Activated CD8-positive, alpha-beta memory T cell treated with anti-CD3 and anti-CD28 coated beads, Interleukin-2, amount 10 ng/mL, durations not matched to agents 7 days and 5 days (primary cell): ENCODE measurements at regions of chr2 and their contacts with region 1.

Region 1: GRCh38 chr2:30711646-30712085 is 95.6 kb downstream of the CAPN13 start:
- DNase-seq: peak; percentile 94
- ATAC-seq: peak; percentile 79
- H3K4me3 Mint-ChIP-seq: no peak overlapping the region
- H3K27ac Mint-ChIP-seq: no peak overlapping the region
- H3K4me1 Mint-ChIP-seq: peaks cover 14% of the 10 kb centered on the region
- H3K27me3 Mint-ChIP-seq: peaks cover 7% of the 10 kb centered on the region

Region 2: DNA sequence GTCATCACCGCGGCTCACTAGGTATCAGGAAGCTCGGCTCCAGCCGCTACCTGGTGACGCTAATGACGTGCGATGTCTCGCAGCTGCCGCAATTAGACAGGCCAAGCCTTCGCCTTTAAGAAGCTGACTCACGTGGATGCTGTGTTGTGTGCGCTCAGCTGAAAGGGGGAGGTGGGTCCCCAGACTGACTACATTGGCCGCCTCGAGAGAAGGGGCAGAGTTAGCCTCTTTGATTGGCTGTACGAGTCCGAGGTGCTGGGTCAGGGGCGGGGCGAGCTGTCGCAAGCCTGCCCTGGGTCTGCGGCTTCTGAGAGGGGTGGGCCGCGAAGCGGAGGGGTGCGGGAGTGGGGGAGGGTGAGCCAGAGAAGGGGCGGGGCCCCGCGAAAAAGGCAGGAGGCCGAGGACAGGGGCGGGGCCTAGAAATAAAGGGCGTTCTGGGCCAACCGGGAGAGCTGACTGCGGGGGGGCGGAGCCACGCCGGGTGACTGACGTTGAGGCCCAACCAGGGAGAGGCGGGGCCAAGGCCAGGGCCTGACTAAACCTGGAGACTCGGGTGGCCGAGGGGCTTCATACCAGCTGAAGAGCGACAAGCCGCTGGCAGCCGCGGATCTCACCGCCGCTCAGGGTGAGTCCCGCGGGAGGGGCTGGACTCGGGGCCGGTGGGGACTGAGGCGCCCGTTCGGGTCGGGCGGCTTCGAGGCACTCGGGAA is 565.1 kb before region 1 on chr2 and contains the start of gene YPEL5:
- CTCF ChIA-PET with region 1: interaction called, 34 read pairs
- DNase-seq: peak; percentile 99
- ATAC-seq: peak; percentile 91
- H3K4me3 Mint-ChIP-seq: peak within 1 kb of the TSS; percentile 82
- H3K27ac Mint-ChIP-seq: peak within 1 kb of the TSS; percentile 97
- H3K4me1 Mint-ChIP-seq: peaks cover 33% of the 10 kb centered on the region
- H3K27me3 Mint-ChIP-seq: no peaks in the 10 kb centered on the region
- total RNA-seq, gene YPEL5: 24.2 to 26.5 TPM

Region 3: GRCh38 chr2:30208452-30208851 is 503.2 kb before region 1 on chr2:
- CTCF ChIA-PET with region 1: interaction called, 172 read pairs
- DNase-seq: peak; percentile 54
- ATAC-seq: peak; percentile 70
- H3K4me3 Mint-ChIP-seq: no peak overlapping the region
- H3K27ac Mint-ChIP-seq: no peak overlapping the region
- H3K4me1 Mint-ChIP-seq: peaks cover 14% of the 10 kb centered on the region
- H3K27me3 Mint-ChIP-seq: peaks cover 2% of the 10 kb centered on the region

Region 4: GRCh38 chr2:30691948-30692828 is 19.5 kb before region 1 on chr2:
- CTCF ChIA-PET with region 1: interaction called, 28 read pairs
- DNase-seq: peak; percentile 30
- ATAC-seq: no peak
- H3K4me3 Mint-ChIP-seq: no peak overlapping the region
- H3K27ac Mint-ChIP-seq: no peak overlapping the region
- H3K4me1 Mint-ChIP-seq: no peaks in the 10 kb centered on the region
- H3K27me3 Mint-ChIP-seq: peaks cover 3% of the 10 kb centered on the region

Region 5: GRCh38 chr2:30738164-30738911 is 26.7 kb after region 1 on chr2:
- CTCF ChIA-PET with region 1: no interaction called
- DNase-seq: no peak
- ATAC-seq: no peak
- H3K4me3 Mint-ChIP-seq: no peak overlapping the region
- H3K27ac Mint-ChIP-seq: no peak overlapping the region
- H3K4me1 Mint-ChIP-seq: no peaks in the 10 kb centered on the region
- H3K27me3 Mint-ChIP-seq: peaks cover 6% of the 10 kb centered on the region

Region 6: GRCh38 chr2:30823452-30823851 is 111.8 kb after region 1 on chr2:
- CTCF ChIA-PET with region 1: no interaction called
- DNase-seq: no peak
- ATAC-seq: no peak
- H3K4me3 Mint-ChIP-seq: no peak overlapping the region
- H3K27ac Mint-ChIP-seq: no peak overlapping the region
- H3K4me1 Mint-ChIP-seq: no peaks in the 10 kb centered on the region
- H3K27me3 Mint-ChIP-seq: no peaks in the 10 kb centered on the region

Region 7: DNA sequence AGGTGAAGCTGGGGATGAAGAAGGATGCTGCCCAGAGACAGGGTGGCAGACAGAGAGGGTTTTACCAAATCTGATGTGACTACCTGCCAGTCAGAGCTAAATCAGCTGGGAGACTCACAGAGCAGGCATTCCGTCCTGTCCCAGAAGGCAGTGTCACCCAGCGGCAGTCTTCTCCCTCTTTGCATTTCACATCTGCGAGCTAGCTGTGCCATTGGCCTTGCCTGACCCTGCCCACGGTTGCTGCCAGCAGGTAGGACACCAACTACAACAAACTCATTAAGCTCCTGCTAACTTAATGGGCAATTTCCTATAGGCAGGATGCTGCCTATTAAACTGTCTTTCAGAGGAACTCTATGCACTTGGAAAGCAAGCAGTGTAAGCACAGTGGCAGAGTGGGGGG is 211.9 kb after region 1 on chr2:
- CTCF ChIA-PET with region 1: no interaction called
- DNase-seq: no peak
- ATAC-seq: no peak
- H3K4me3 Mint-ChIP-seq: no peak overlapping the region
- H3K27ac Mint-ChIP-seq: no peak overlapping the region
- H3K4me1 Mint-ChIP-seq: no peaks in the 10 kb centered on the region
- H3K27me3 Mint-ChIP-seq: no peaks in the 10 kb centered on the region

Region 8: DNA sequence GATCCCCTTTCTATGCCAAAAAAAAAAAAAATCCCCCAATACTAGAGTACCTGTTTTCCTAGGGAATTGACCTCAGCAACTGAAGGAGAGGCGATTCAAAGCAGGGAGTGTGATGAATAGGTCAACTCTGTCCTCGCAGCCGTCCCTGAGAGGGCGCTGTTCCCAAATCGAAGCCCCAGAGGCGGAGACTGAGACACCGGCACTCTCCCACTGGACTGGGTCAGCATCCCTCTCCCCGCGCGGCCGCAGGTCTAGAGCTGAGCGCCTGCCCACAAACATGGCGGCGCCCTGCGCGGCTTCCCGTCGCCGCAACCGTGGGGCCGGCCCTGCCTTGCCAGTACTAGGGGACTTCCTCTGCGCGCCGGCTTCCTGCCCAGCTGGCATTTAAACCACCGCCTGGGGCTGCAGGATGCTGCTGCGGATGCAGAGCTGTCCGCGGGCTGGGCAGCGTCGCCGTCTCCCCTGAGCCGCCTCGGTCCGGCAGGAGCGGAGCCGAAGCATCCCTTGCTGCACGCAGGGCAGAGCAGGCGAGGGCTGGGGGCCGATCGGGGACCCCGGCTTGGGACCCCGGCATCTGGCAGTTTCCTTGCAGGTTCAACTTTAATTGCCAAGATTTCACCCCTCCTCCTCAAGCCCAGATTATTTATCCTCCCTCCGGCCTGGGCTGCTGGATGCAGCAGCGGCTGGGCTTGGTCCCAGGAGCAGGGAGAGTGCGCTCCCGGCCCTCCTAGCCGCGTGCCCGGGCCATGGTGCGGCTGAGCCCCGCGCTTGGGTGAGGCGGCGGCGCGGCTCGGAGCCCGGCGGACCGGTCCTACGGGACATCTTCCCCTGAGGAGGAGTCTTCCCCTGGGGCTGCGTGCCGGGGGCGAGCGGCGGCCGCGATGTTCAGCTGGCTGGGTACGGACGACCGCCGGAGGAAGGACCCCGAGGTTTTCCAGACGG is 522.3 kb after region 1 on chr2 and contains the start of gene EHD3:
- CTCF ChIA-PET with region 1: interaction called, 15 read pairs
- DNase-seq: peak; percentile 89
- ATAC-seq: peak; percentile 96
- H3K4me3 Mint-ChIP-seq: peak within 1 kb of the TSS; percentile 69
- H3K27ac Mint-ChIP-seq: no peak within 1 kb of the TSS
- H3K4me1 Mint-ChIP-seq: peaks cover 12% of the 10 kb centered on the region
- H3K27me3 Mint-ChIP-seq: peaks cover 27% of the 10 kb centered on the region
- total RNA-seq, gene EHD3: 0.41 to 1.1 TPM